ENCODE measurements at regions of chr9 and their contacts with region 1.

Region 1: GRCh38 chr9:130712564-130713285 is 19.1 kb downstream of the EXOSC2 start:
- DNase-seq: peak; percentile 96
- ATAC-seq: peak; percentile 97
- H3K4me3 ChIP-seq: peak overlapping the region; percentile 87 to 93
- H3K27ac ChIP-seq: peak overlapping the region; percentile 74
- H3K4me1 ChIP-seq: peaks cover 0 to 31% of the 10 kb centered on the region in 2 experiments; a peak in 3 of 4 replicates
- H3K27me3 ChIP-seq: no peaks in the 10 kb centered on the region
- CTCF ChIP-seq: no peak
- POLR2A ChIP-seq: no peak
- RAD21 ChIP-seq: no peak

Region 2: GRCh38 chr9:130640681-130641080 is 72.0 kb before region 1 on chr9:
- CTCF ChIA-PET with region 1: no interaction called
- POLR2A ChIA-PET with region 1: no interaction called
- RAD21 ChIA-PET with region 1: no interaction called
- intact Hi-C with region 1: no loop called
- DNase-seq: no peak
- ATAC-seq: peak; percentile 57
- H3K4me3 ChIP-seq: no peak overlapping the region
- H3K27ac ChIP-seq: no peak overlapping the region
- H3K4me1 ChIP-seq: no peaks in the 10 kb centered on the region
- H3K27me3 ChIP-seq: no peaks in the 10 kb centered on the region
- CTCF ChIP-seq: no peak; a peak in 1 of 6 replicates
- POLR2A ChIP-seq: no peak
- RAD21 ChIP-seq: peak; percentile 20; the same call in 1 of the 2 replicates

Region 3: DNA sequence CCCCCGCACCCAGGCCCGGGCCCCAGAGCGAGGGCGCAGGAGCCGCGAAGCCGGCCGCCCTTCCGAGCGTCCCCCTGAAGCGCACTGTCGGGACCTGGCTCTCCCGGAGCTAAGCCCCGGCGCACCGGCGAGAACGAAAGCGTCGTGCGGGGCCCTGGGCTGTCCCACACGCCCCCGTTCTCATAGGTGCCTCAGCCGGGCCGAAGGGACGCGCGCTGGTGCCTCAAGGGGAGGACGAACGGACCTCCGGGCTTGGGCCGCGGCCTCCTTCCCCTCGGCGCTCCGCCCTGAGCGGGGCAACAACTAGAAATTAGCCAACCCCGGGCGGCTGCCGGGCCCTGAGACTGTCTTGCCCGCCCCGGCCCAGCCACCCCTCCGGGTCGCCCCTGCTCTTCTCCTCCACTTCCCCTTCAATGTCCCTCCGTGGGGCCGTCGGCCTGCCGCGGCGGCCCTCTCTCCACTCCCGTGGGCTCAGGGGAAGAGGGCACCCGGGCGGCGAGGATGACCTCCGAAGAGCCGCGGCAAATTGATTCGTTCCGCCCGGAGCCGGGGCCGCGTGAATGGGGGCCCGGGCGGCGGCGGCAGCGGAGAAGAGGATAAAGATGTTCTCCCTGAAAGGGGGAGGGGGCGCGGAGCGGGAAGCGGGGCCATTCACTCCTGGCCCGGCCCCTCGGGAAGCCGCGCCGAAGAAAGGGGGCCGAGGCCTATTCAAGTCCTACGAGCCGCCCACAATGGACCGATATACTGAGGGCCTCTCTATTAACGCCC is 51.9 kb before region 1 on chr9:
- CTCF ChIA-PET with region 1: no interaction called
- POLR2A ChIA-PET with region 1: no interaction called
- RAD21 ChIA-PET with region 1: no interaction called
- intact Hi-C with region 1: no loop called
- DNase-seq: no peak
- ATAC-seq: no peak
- H3K4me3 ChIP-seq: no peak overlapping the region
- H3K27ac ChIP-seq: no peak overlapping the region
- H3K4me1 ChIP-seq: no peaks in the 10 kb centered on the region
- H3K27me3 ChIP-seq: no peaks in the 10 kb centered on the region
- CTCF ChIP-seq: no peak
- POLR2A ChIP-seq: no peak
- RAD21 ChIP-seq: no peak

Region 4: DNA sequence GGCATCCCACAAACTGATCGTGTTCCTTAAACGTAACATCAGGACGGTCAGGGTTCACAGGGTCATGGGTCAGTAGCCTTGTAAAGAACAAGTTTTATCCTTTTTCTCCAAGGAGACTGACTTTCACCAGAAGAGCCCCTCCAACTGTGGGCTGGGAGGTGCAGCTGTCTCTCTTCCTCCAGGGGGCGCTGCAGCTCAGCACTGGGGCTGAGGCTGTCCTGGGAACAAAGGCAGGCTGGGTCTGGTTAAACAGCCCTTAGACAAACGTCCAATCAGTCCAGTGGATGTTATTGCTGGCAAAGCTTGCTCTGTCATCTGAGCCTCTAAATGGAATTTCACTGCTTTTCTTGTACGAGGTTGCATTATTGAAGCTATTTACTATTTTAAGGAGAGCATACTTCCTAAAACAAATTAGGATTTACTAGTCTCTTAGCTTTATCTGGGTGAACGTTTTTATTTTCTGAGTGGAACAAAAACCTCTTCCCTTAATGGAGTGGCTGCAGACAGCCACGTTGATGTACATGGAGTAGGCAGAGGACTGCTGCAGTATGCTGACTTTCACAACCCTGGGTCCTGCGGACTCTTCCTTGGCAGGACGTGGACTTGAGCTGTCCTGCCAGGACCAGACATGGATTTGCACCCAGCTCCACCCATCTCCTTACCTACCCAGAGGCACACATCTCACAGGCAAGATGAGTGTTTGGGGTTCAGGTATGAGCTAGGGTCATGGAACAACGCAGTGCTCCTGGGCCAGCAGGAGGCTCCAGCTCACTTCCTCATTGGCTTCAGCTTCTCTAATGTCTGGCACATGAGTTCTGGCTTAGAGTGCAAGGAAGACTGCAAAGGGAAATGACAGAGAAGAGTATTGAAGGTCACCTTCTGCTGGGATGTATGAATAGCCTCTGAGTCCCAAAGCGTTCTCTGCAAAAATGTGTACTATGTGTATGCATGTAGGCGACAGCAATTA is 11.4 kb before region 1 on chr9:
- CTCF ChIA-PET with region 1: interaction called, 16 read pairs
- POLR2A ChIA-PET with region 1: interaction called, 3 read pairs
- RAD21 ChIA-PET with region 1: no interaction called
- intact Hi-C with region 1: no loop called
- DNase-seq: no peak
- ATAC-seq: peak; percentile 93
- H3K4me3 ChIP-seq: no peak overlapping the region
- H3K27ac ChIP-seq: no peak overlapping the region
- H3K4me1 ChIP-seq: peaks cover 3 to 7% of the 10 kb centered on the region in 2 experiments; a peak in 3 of 4 replicates
- H3K27me3 ChIP-seq: no peaks in the 10 kb centered on the region
- CTCF ChIP-seq: peak; percentile 65 to 99 (median 99); a peak in 5 of 6 replicates
- POLR2A ChIP-seq: no peak
- RAD21 ChIP-seq: peak; percentile 71

Region 5: DNA sequence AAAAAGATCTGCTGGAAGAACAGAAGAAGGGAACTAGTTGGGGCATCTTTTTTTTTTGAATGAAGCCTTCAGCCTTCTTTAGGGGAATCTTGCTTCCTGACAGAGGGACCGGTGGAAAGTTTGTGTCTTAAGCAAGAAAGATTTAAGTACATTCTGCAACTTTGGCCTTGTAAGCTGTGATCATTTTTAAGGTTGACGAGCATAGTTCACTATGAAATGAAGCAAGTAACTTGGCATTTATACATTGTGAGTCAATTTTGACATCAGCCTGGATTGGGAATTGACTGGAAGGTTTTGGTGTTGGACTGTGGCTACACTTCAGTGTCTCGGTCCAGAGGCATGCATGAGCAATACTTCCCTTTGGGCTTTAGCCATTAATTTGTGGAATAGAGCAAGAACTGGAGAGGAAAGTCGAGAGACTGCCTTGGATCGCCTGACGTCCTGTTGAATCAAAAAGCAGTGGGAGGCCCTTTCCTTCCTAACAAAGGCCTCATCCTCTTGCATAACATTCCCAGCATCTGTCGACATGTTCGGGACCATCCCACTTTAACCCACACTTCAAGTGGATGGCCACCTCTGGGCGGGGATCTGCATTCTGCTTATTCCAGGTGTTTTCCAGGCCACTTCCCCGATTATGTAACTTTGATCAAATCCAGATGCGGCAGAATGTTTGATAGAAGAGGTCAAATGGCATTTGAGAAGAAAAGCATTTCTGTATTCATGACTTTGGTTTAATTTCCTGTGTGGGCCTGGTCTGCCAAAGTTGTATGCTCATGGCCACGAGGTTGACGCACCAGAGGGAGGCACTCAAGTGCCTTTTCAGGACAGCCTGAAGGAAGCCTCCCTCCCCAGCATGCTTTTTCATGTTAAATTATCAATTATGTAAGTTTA is 134.8 kb after region 1 on chr9:
- CTCF ChIA-PET with region 1: no interaction called
- POLR2A ChIA-PET with region 1: no interaction called
- RAD21 ChIA-PET with region 1: no interaction called
- intact Hi-C with region 1: loop called (anchors 5 kb)
- DNase-seq: no peak
- ATAC-seq: peak; percentile 51
- H3K4me3 ChIP-seq: no peak overlapping the region; a peak in 1 of 4 replicates
- H3K27ac ChIP-seq: peak overlapping the region; percentile 77
- H3K4me1 ChIP-seq: peaks cover 41 to 45% of the 10 kb centered on the region in 2 experiments
- H3K27me3 ChIP-seq: no peaks in the 10 kb centered on the region
- CTCF ChIP-seq: peak in 2 of 3 experiments; percentile 20 to 31; a peak in 2 of 6 replicates
- POLR2A ChIP-seq: no peak
- RAD21 ChIP-seq: no peak

Region 6: GRCh38 chr9:131297903-131298302 is 585.2 kb after region 1 on chr9:
- CTCF ChIA-PET with region 1: no interaction called
- POLR2A ChIA-PET with region 1: no interaction called
- RAD21 ChIA-PET with region 1: no interaction called
- intact Hi-C with region 1: no loop called
- DNase-seq: no peak
- ATAC-seq: no peak
- H3K4me3 ChIP-seq: no peak overlapping the region
- H3K27ac ChIP-seq: no peak overlapping the region
- H3K4me1 ChIP-seq: no peaks in the 10 kb centered on the region
- H3K27me3 ChIP-seq: no peaks in the 10 kb centered on the region
- CTCF ChIP-seq: no peak
- POLR2A ChIP-seq: no peak
- RAD21 ChIP-seq: no peak